ENCODE measurements at regions of chrX and their contacts with region 1.

Region 1: GRCh38 chrX:17046478-17047097 is 100.1 kb downstream of the REPS2 start:
- DNase-seq: peak; percentile 85

Region 2: DNA sequence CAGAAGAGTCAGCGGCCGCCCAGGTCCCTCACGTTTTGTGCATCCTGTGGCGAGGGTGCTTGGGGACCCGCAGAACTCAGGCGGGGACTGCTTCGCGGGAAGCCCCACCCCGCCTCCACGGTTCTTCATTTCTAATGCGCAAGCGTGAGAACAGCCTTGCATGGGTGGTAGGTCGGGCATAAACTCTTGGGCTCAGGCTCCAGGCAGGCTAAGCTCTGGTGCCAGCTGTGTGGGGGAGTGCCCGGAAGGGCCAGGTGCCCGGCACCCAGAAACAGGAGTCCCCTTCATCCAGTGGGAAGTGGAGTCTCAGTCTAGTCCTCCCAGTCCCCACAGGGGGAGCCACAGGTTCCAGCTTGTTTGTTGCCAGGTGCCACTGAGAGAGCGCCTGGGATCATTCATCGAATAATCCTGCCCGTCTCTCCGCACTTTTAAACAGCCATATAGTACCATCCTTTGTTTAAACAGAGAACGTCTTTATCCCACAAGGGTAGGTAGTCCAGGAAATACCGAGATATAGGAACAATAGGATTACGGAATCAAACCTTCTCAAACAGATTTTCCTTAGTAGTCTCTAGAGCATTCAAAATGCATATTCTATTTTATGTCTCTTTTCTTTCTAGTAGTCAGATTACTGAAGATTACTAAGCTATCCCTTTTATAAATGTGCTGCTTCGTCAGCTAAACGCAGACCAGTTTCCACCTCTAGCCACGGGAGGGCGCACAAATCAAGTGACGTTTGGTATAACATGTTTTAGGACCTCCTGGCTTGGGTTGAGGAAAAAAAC is 163.7 kb before region 1 on chrX:
- in situ Hi-C with region 1: loop called (anchors 25 kb)
- DNase-seq: peak; percentile 79